ENCODE measurements at regions of chr1 and their contacts with region 1.

Region 1: GRCh38 chr1:112715264-112716053 is at the start of gene PPM1J:
- DNase-seq: peak; percentile 93 to 96
- ATAC-seq: peak; percentile 59 to 78
- H3K4me3 ChIP-seq: peak within 1 kb of the TSS; percentile 75 to 96 (median 82)
- H3K27ac ChIP-seq: peak within 1 kb of the TSS; percentile 84 to 93 (median 92)
- H3K4me1 ChIP-seq: peaks cover 20 to 22% of the 10 kb centered on the region in 2 donors
- H3K27me3 ChIP-seq: peaks cover 0 to 6% (median 0%) of the 10 kb centered on the region in 3 donors
- CTCF ChIP-seq: no peak
- POLR2A ChIP-seq: peak in 1 of 2 donors; percentile 69
- total RNA-seq, gene PPM1J: 4.2 to 5.4 (median 4.8) TPM

Region 2: GRCh38 chr1:112369392-112370285 is 345.8 kb before region 1 on chr1:
- in situ Hi-C with region 1: no loop called
- intact Hi-C with region 1: no loop called
- DNase-seq: peak; percentile 66 to 71
- ATAC-seq: peak; percentile 93 to 99
- H3K4me3 ChIP-seq: no peak overlapping the region
- H3K27ac ChIP-seq: no peak overlapping the region
- H3K4me1 ChIP-seq: no peaks in the 10 kb centered on the region
- H3K27me3 ChIP-seq: no peaks in the 10 kb centered on the region
- CTCF ChIP-seq: peak; percentile 77 to 94 (median 86)
- POLR2A ChIP-seq: no peak

Region 3: DNA sequence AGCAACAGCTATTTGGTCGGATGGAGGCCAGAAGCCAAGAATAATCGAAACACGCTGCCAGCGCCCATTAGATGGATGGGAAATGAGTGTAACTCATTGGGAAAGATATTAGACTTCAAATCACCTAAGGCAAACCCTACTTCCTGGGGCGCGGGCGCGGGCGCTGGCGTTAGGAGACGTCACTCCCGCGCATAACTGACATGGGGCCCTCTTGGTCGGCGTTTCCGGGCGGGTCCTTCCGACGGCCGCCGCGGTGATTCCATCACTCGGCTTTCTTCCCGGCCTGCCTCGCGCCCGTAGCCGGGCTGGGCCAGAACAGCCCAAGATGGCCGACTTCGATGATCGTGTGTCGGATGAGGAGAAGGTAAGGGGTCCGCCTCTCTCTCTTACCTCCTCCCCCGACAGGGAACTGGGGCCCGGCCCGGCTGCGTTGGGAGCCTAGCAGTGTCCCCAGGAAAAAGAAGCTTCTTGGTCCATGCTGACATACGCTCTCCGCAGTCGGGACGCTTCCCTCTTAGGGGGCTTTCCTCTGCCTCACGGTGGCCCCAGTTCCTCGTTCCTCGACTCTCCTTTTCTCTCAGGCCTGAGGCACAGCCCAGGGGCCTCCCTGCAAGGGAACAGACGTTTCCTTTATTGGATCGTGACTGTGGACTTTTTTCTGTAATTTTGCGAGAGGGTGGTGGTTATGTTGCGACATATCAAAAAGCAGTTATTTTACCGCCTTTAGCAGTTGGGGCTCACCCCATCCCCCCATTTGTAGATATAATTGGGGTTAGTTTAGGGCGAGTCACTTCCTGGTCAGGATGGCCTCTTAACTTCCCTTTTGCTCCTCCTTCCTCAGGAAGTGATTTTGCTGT is 95.7 kb before region 1 on chr1 and contains the start of gene CAPZA1:
- in situ Hi-C with region 1: no loop called
- intact Hi-C with region 1: loop called (anchors 2 kb)
- DNase-seq: peak; percentile 86 to 90
- ATAC-seq: peak; percentile 94
- H3K4me3 ChIP-seq: peak within 1 kb of the TSS; percentile 79 to 100 (median 95)
- H3K27ac ChIP-seq: peak within 1 kb of the TSS; percentile 97 to 99 (median 98)
- H3K4me1 ChIP-seq: peaks cover 33 to 42% of the 10 kb centered on the region in 2 donors
- H3K27me3 ChIP-seq: no peaks in the 10 kb centered on the region
- CTCF ChIP-seq: no peak
- POLR2A ChIP-seq: peak; percentile 85 to 94
- total RNA-seq, gene CAPZA1: 27.1 to 58.1 (median 35.2) TPM

Region 4: GRCh38 chr1:112809253-112809684 is 93.8 kb after region 1 on chr1:
- in situ Hi-C with region 1: loop called (anchors 5 kb)
- intact Hi-C with region 1: loop called (anchors 1 kb)
- DNase-seq: peak; percentile 19 to 58
- ATAC-seq: peak in 1 of 2 donors; percentile 56
- H3K4me3 ChIP-seq: no peak overlapping the region
- H3K27ac ChIP-seq: peak overlapping the region; percentile 71 to 80 (median 76)
- H3K4me1 ChIP-seq: peaks cover 13 to 23% of the 10 kb centered on the region in 2 donors
- H3K27me3 ChIP-seq: no peaks in the 10 kb centered on the region
- CTCF ChIP-seq: peak; percentile 51 to 85 (median 70)
- POLR2A ChIP-seq: no peak

Region 5: DNA sequence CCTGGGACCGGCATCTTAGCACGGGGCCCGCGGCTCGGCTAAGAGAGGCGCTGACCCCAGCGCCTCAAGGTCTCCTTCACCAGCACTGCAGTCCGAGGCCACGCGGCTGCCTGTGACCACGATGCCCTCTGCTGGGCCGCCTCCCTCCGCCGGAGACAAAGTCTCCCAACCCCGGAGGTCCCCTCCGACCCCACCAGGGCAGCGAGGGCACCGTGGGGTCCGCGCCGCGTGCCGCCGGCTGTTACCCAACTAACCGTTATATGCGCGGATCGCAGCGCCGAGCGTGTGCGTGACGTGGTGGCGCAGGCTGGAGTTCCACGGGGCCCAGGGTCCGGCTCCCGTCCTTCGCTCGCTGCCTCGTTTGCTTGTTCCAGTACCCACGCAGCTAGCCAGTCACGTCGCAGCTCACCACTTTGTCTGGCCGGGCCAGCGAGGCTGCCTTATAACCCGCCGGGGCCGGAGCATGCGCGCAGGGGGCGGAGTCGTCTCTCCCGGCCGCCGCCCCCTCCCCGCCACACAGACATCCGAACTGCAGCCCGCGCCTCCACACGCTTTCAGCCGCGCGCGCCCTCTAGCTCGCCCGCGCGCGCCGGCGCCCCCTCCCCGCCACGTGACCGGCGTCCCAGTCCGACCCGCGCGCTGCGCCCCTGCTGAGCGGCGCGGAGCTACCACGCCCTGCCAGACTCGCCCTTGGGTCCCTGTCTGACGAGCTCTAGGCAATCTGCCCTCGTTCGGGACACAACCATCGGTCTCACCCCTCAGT is 240.5 kb after region 1 on chr1 and contains the start of gene SLC16A1:
- in situ Hi-C with region 1: no loop called
- intact Hi-C with region 1: loop called (anchors 1 kb)
- DNase-seq: peak; percentile 93
- ATAC-seq: peak; percentile 71 to 75
- H3K4me3 ChIP-seq: peak within 1 kb of the TSS; percentile 74 to 96 (median 80)
- H3K27ac ChIP-seq: peak within 1 kb of the TSS; percentile 93 to 100 (median 96)
- H3K4me1 ChIP-seq: peaks cover 43 to 50% of the 10 kb centered on the region in 2 donors
- H3K27me3 ChIP-seq: no peaks in the 10 kb centered on the region
- CTCF ChIP-seq: peak in 3 of 5 experiments; percentile 29 to 43 (median 34)
- POLR2A ChIP-seq: peak; percentile 94 to 99
- total RNA-seq, gene SLC16A1: 26.5 to 41.6 (median 36.2) TPM

Region 6: DNA sequence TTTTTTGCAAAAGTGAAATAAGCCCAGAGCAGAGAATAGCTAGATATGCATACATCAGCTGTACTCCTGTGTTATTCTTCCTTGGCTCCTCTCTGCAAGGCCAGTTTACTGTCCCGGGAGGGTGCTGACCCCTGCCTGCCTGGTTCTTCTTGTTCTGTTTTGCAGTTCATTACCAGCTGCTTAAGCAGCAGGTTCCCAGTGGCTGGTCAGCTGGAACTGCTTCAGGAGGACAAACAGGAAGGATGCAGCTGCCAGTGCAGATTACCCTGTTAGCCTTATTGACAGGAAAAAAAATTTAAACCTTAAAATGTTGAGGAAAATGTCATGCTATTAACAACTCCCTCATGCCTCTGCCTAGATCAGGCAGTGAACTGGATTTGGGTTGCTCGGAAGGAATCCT is 341.5 kb after region 1 on chr1:
- in situ Hi-C with region 1: loop called in 1 of 4 experiments (anchors 10 kb)
- intact Hi-C with region 1: no loop called
- DNase-seq: no peak
- ATAC-seq: no peak
- H3K4me3 ChIP-seq: no peak overlapping the region
- H3K27ac ChIP-seq: no peak overlapping the region
- H3K4me1 ChIP-seq: no peaks in the 10 kb centered on the region
- H3K27me3 ChIP-seq: no peaks in the 10 kb centered on the region
- CTCF ChIP-seq: no peak
- POLR2A ChIP-seq: no peak

Region 7: GRCh38 chr1:113677250-113678158 is 962.0 kb after region 1 on chr1:
- in situ Hi-C with region 1: no loop called
- intact Hi-C with region 1: loop called (anchors 1 kb)
- DNase-seq: peak; percentile 19 to 66
- ATAC-seq: peak; percentile 72 to 95
- H3K4me3 ChIP-seq: no peak overlapping the region
- H3K27ac ChIP-seq: no peak overlapping the region
- H3K4me1 ChIP-seq: peaks cover 7 to 8% of the 10 kb centered on the region in 2 donors
- H3K27me3 ChIP-seq: no peaks in the 10 kb centered on the region
- CTCF ChIP-seq: peak in 4 of 5 experiments; percentile 30 to 60 (median 52)
- POLR2A ChIP-seq: no peak

Measured in gastrocnemius medialis (tissue), 4 donors.